ENCODE measurements at regions of chr9 and their contacts with region 1.

Region 1: DNA sequence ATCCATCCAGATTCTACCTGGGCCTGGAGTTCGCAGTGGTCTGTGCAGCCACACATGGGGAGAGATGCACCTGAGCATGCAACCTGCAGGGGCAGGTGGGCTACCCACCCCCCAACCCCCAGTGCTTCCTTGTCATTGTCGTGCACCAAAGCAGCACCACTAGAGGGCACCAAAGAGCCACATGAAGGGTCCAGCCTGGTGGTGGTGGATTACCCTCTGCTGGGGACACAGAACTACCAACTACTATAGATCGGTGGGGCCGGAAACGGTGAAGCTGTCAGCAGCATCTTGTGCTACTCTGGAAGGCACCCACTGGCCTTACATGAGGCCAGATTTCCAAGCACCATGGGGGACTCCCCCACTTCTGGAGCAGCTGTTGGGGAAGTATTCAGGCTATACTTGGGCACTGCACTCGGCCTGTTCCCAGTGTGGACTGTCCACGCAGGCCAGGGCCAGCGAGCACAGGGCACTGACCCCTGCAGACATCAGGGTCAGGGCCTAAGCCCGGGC is 60.2 kb upstream of the TBC1D2 start:
- DNase-seq: peak; percentile 84
- H3K4me3 Mint-ChIP-seq: no peak overlapping the region
- H3K27ac Mint-ChIP-seq: no peak overlapping the region
- H3K4me1 Mint-ChIP-seq: no peaks in the 10 kb centered on the region
- H3K27me3 Mint-ChIP-seq: peaks cover 27% of the 10 kb centered on the region
- CTCF ChIP-seq: peak; percentile 73

Region 2: GRCh38 chr9:98222885-98223640 is 92.5 kb before region 1 on chr9:
- CTCF ChIA-PET with region 1: no interaction called
- intact Hi-C with region 1: no loop called
- DNase-seq: peak; percentile 56
- H3K4me3 Mint-ChIP-seq: peak overlapping the region; percentile 1
- H3K27ac Mint-ChIP-seq: peak overlapping the region; percentile 58
- H3K4me1 Mint-ChIP-seq: peaks cover 42% of the 10 kb centered on the region
- H3K27me3 Mint-ChIP-seq: no peaks in the 10 kb centered on the region
- CTCF ChIP-seq: no peak

Region 3: DNA sequence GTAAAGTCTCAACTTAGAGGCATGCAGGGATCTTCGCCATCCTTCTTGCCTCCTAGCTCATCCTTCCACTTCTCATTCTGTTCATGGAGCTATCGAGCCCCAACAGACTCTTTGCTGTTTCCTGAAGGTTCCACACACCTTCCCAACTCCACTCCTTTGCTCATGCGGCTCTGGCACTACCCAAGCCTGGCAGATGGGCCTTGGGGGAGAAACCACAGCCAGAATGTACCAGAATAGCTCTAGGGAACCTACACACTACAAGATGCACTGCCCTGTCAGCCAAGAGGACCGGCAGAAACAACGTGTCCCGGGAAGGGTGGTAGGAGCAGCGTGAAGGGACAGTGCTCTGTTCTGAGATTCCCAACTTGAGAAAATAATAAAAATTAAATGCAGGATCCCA is 214.2 kb after region 1 on chr9:
- CTCF ChIA-PET with region 1: no interaction called
- intact Hi-C with region 1: loop called (anchors 5 kb)
- DNase-seq: no peak
- H3K4me3 Mint-ChIP-seq: no peak overlapping the region
- H3K27ac Mint-ChIP-seq: no peak overlapping the region
- H3K4me1 Mint-ChIP-seq: no peaks in the 10 kb centered on the region
- H3K27me3 Mint-ChIP-seq: peaks cover 73% of the 10 kb centered on the region
- CTCF ChIP-seq: no peak

Region 4: DNA sequence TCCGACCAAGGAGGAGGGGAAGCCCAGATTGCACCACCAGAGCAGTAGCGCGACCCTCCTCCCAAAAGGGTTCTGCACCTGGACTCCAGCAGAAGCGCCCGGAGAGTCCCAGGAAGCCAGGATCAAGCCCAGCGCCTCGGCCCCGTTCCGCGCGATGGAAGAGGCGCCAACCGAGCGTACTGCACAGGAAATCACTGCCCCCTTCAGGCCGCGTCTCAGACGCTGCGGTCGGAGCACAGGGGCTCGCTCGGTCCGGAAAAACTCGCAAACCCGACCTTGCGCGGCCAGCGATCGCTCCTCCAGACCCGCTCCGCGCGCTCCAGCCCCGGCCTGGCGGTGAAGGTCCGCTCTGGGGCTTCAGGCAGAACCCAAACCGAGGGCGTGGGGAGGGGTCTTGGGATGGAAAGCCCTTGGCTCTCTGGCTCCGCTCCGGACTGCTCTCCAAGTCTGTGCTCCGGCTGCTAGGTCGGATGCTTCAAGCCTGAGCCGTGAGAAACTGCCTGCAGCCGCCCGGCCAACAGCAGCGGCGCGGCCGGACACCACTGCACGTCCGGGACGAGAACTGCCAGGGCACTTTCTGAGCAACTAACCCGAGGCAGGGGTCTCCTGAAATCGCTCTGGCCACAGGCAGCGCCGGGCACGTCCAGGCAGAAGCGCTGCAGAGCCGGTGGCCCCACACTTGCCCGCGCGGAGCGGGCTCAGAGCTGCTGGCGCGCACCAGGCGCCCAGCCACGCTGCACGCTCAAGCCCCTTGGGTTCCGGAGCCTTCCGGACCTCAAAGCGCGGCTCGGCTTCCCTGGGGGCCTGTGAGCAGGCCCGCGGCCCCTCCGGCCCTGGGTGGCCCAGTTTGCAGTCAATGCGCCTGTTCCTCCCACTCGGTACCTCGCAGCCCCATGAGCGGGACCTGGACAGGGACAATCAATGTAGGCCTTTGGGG is 391.8 kb after region 1 on chr9:
- CTCF ChIA-PET with region 1: no interaction called
- intact Hi-C with region 1: loop called (anchors 10 kb)
- DNase-seq: peak; percentile 57
- H3K4me3 Mint-ChIP-seq: peak overlapping the region; percentile 43
- H3K27ac Mint-ChIP-seq: no peak overlapping the region
- H3K4me1 Mint-ChIP-seq: no peaks in the 10 kb centered on the region
- H3K27me3 Mint-ChIP-seq: peaks cover 87% of the 10 kb centered on the region
- CTCF ChIP-seq: peak; percentile 6

Region 5: DNA sequence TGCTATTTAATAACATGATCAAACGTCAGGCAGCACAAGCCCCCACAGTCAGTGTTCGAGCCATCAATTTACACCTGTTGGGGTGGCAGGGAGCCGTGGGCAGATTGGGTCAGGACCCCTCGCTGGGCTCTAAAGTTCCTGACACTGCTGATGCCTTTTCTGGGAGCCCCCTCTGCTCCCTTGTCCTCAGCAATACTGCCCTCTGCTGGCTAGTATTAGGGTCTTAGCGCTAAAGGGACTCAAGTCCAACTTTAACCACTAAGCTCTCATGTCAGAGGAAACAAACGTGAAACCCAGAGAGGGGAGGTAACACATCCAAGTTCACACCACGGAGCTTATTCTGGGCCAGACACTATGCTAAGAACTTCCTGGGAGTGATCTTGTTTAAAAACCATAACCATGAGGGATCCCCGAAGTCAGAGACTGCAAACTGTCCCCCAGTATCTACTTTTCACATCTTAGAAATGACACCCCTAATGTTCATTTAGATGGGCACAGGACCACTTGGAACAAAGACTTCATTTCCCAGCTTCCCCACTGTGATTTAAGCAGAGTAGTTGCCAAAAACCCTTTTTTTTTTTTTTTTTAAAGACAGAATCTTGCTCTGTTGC is 460.3 kb after region 1 on chr9:
- CTCF ChIA-PET with region 1: interaction called, 7 read pairs
- intact Hi-C with region 1: loop called (anchors 5 kb)
- DNase-seq: peak; percentile 40
- H3K4me3 Mint-ChIP-seq: no peak overlapping the region
- H3K27ac Mint-ChIP-seq: no peak overlapping the region
- H3K4me1 Mint-ChIP-seq: peaks cover 11% of the 10 kb centered on the region
- H3K27me3 Mint-ChIP-seq: no peaks in the 10 kb centered on the region
- CTCF ChIP-seq: peak; percentile 40